Activated CD8-positive, alpha-beta T cell treated with anti-CD3 and anti-CD28 coated beads for 36 hours (primary cell): ENCODE measurements at regions of chr12 and their contacts with region 1.

Region 1: GRCh38 chr12:44000309-44000952 is 164.6 kb downstream of the TMEM117 start:
- DNase-seq: peak; percentile 31
- ATAC-seq: peak; percentile 82
- H3K4me3 Mint-ChIP-seq: no peak overlapping the region
- H3K27ac Mint-ChIP-seq: no peak overlapping the region
- H3K4me1 Mint-ChIP-seq: no peaks in the 10 kb centered on the region
- H3K27me3 Mint-ChIP-seq: no peaks in the 10 kb centered on the region
- CTCF ChIP-seq: peak; percentile 64

Region 2: GRCh38 chr12:43758728-43759563 is 241.5 kb before region 1 on chr12 and contains the starts of genes IRAK4 and PUS7L:
- CTCF ChIA-PET with region 1: no interaction called
- POLR2A ChIA-PET with region 1: no interaction called
- intact Hi-C with region 1: no loop called
- DNase-seq: peak; percentile 98
- ATAC-seq: peak; percentile 97
- H3K4me3 Mint-ChIP-seq: peak within 1 kb of the TSS; percentile 93
- H3K27ac Mint-ChIP-seq: peak within 1 kb of the TSS; percentile 98
- H3K4me1 Mint-ChIP-seq: peaks cover 62% of the 10 kb centered on the region
- H3K27me3 Mint-ChIP-seq: no peaks in the 10 kb centered on the region
- CTCF ChIP-seq: no peak
- total RNA-seq, gene IRAK4: 24.0 TPM
- total RNA-seq, gene PUS7L: 16.7 to 18.7 TPM

Region 3: GRCh38 chr12:44015335-44015941 is 15.0 kb after region 1 on chr12:
- CTCF ChIA-PET with region 1: interaction called, 12 read pairs
- POLR2A ChIA-PET with region 1: no interaction called
- intact Hi-C with region 1: no loop called
- DNase-seq: no peak
- ATAC-seq: peak; percentile 47
- H3K4me3 Mint-ChIP-seq: no peak overlapping the region
- H3K27ac Mint-ChIP-seq: no peak overlapping the region
- H3K4me1 Mint-ChIP-seq: no peaks in the 10 kb centered on the region
- H3K27me3 Mint-ChIP-seq: no peaks in the 10 kb centered on the region
- CTCF ChIP-seq: peak; percentile 66

Region 4: DNA sequence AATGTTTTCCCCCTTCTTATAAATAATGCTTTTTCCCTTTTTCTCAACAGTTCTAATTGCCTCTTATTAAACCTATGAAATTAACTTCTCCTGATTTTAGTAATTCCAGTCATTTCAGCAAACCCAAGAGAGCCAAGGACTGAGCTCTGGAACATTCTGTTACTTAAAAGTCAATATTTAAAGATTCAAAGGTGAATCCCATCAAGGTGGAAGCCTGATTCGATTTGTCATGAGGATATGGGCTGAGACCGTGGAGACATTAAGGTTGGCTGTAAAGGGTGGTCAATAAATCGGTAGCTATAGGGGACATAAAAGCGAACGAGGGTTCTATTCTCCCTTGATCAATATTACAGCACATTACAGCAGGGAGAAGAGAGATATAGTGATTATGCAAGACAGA is 942.3 kb after region 1 on chr12:
- CTCF ChIA-PET with region 1: no interaction called
- POLR2A ChIA-PET with region 1: no interaction called
- intact Hi-C with region 1: loop called (anchors 10 kb)
- DNase-seq: no peak
- ATAC-seq: no peak
- H3K4me3 Mint-ChIP-seq: no peak overlapping the region
- H3K27ac Mint-ChIP-seq: no peak overlapping the region
- H3K4me1 Mint-ChIP-seq: no peaks in the 10 kb centered on the region
- H3K27me3 Mint-ChIP-seq: no peaks in the 10 kb centered on the region
- CTCF ChIP-seq: no peak